Heart right ventricle (tissue), 16 donors: ENCODE measurements at regions of chr1 and their contacts with region 1.

Region 1: GRCh38 chr1:48869116-48869893 is 92.6 kb upstream of the BEND5 start:
- DNase-seq: no peak
- ATAC-seq: peak in 1 of 8 donors; percentile 37
- H3K4me3 ChIP-seq: no peak overlapping the region
- H3K27ac ChIP-seq: no peak overlapping the region
- H3K4me1 ChIP-seq: no peaks in the 10 kb centered on the region
- H3K27me3 ChIP-seq: peaks cover 0 to 15% (median 0%) of the 10 kb centered on the region in 7 donors
- CTCF ChIP-seq: no peak

Region 2: GRCh38 chr1:48266576-48266975 is 602.7 kb before region 1 on chr1:
- intact Hi-C with region 1: loop called in 1 of 10 experiments (anchors 10 kb)
- DNase-seq: no peak
- ATAC-seq: no peak
- H3K4me3 ChIP-seq: no peak overlapping the region
- H3K27ac ChIP-seq: no peak overlapping the region
- H3K4me1 ChIP-seq: no peaks in the 10 kb centered on the region
- H3K27me3 ChIP-seq: no peaks in the 10 kb centered on the region
- CTCF ChIP-seq: no peak

Region 3: GRCh38 chr1:48750109-48750508 is 119.2 kb before region 1 on chr1:
- intact Hi-C with region 1: no loop called
- DNase-seq: no peak
- ATAC-seq: no peak
- H3K4me3 ChIP-seq: no peak overlapping the region
- H3K27ac ChIP-seq: no peak overlapping the region
- H3K4me1 ChIP-seq: peaks cover 0 to 6% (median 0%) of the 10 kb centered on the region in 9 donors
- H3K27me3 ChIP-seq: no peaks in the 10 kb centered on the region
- CTCF ChIP-seq: no peak

Region 4: DNA sequence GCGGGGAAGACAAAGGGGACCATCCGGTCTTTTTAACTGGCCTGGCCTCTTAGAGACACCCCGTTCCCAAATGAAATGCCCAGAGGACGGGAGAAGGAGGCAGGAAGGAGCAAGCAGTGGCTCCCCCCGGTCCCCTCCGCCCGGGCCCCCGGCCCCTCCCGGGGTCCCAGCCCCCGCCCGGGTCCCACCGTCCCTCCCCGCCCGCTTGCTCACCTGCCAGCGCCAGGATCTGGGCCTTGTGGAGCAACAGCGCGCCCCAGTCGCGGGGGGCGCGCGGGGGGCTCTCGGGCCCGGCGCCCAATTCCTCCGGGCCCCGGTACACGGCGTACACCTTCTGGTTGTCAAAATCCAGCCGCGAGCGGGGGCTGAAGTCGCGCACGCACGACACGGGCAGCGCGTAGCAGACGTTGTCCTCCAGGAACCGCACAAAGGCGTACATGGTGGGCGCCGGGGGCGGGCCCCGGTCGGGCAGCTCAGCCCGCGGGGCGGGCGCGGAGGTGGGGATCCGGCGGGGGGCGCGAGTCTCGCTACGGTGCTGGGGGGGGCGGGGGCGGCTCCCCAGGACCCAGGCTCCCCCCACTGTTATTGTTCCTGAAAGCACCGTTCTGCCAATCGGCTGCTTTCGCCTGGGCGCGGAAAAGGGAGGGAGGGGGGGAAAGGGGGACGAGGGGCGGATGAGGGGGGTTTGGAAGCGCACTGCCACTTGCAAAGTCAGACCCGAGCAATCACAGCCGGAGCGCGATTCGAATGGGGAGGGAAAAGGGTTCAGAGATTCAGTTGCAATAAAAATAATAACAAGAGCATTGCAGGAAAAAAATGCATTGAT is 92.7 kb before region 1 on chr1 and contains the start of gene BEND5:
- intact Hi-C with region 1: no loop called
- DNase-seq: peak; percentile 53 to 59
- ATAC-seq: peak; percentile 75 to 92 (median 84)
- H3K4me3 ChIP-seq: peak within 1 kb of the TSS; percentile 61 to 94 (median 82)
- H3K27ac ChIP-seq: peak within 1 kb of the TSS; percentile 4 to 90 (median 78)
- H3K4me1 ChIP-seq: peaks cover 0 to 27% (median 15%) of the 10 kb centered on the region in 9 donors
- H3K27me3 ChIP-seq: peaks cover 0 to 10% (median 0%) of the 10 kb centered on the region in 7 donors
- CTCF ChIP-seq: no peak
- total RNA-seq, gene BEND5: 3.0 to 5.4 (median 4.3) TPM

Region 5: DNA sequence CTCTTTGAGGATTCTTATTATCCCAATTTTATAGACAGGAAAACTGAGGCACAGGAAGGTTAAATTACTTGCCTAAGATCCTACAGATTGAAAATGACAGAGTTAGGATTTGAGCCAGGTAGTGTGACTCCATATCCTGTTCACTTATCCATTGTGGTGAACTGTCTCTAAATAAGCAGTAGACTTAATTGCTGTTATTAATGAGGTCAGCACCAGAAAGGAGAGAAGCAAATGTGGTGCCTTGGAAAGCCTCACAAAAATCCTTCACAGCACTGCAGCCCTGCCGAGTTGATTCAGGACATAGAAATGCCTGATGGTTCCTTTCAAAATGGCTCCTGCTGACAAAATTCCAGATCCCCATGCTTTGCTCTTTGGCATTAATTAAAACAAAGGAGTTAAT is 100.7 kb after region 1 on chr1:
- intact Hi-C with region 1: no loop called
- DNase-seq: no peak
- ATAC-seq: no peak
- H3K4me3 ChIP-seq: no peak overlapping the region
- H3K27ac ChIP-seq: no peak overlapping the region
- H3K4me1 ChIP-seq: no peaks in the 10 kb centered on the region
- H3K27me3 ChIP-seq: no peaks in the 10 kb centered on the region
- CTCF ChIP-seq: no peak